Left ventricle myocardium superior (tissue), 1 donor: ENCODE measurements at regions of chr3 and their contacts with region 1.

Region 1: GRCh38 chr3:40191850-40192448 is 117.6 kb upstream of the EIF1B start:
- DNase-seq: peak; percentile 63
- ATAC-seq: peak; percentile 55

Region 2: GRCh38 chr3:39724233-39724846 is 467.6 kb before region 1 on chr3:
- intact Hi-C with region 1: loop called (anchors 10 kb)
- DNase-seq: no peak
- ATAC-seq: peak; percentile 32

Region 3: GRCh38 chr3:40035177-40035576 is 156.8 kb before region 1 on chr3:
- intact Hi-C with region 1: no loop called
- DNase-seq: no peak
- ATAC-seq: no peak

Region 4: GRCh38 chr3:40086890-40087888 is 104.8 kb before region 1 on chr3:
- intact Hi-C with region 1: no loop called
- DNase-seq: no peak
- ATAC-seq: no peak

Region 5: GRCh38 chr3:40317061-40317855 is 125.3 kb after region 1 on chr3:
- intact Hi-C with region 1: loop called (anchors 2 kb)
- DNase-seq: no peak
- ATAC-seq: no peak